Endothelial cell of umbilical vein (primary cell): ENCODE measurements at regions of chr12 and their contacts with region 1.

Region 1: GRCh38 chr12:9464408-9464807 is 143.3 kb downstream of the KLRB1 start:
- DNase-seq: no peak
- H3K4me3 ChIP-seq: no peak overlapping the region
- H3K27ac ChIP-seq: no peak overlapping the region
- H3K4me1 ChIP-seq: no peaks in the 10 kb centered on the region
- H3K27me3 ChIP-seq: no peaks in the 10 kb centered on the region
- CTCF ChIP-seq: no peak
- POLR2A ChIP-seq: no peak

Region 2: GRCh38 chr12:9364224-9365176 is 99.9 kb before region 1 on chr12:
- CTCF ChIA-PET with region 1: interaction called, 11 read pairs
- POLR2A ChIA-PET with region 1: no interaction called
- dilution Hi-C with region 1: no loop called
- intact Hi-C with region 1: no loop called
- DNase-seq: no peak
- H3K4me3 ChIP-seq: no peak overlapping the region
- H3K27ac ChIP-seq: no peak overlapping the region
- H3K4me1 ChIP-seq: no peaks in the 10 kb centered on the region
- H3K27me3 ChIP-seq: peaks cover 3 to 15% of the 10 kb centered on the region in 2 experiments
- CTCF ChIP-seq: no peak
- POLR2A ChIP-seq: no peak

Region 3: GRCh38 chr12:9372202-9372601 is 92.2 kb before region 1 on chr12:
- CTCF ChIA-PET with region 1: interaction called, 39 read pairs
- POLR2A ChIA-PET with region 1: no interaction called
- dilution Hi-C with region 1: no loop called
- intact Hi-C with region 1: no loop called
- DNase-seq: peak; percentile 18
- H3K4me3 ChIP-seq: no peak overlapping the region
- H3K27ac ChIP-seq: no peak overlapping the region
- H3K4me1 ChIP-seq: no peaks in the 10 kb centered on the region
- H3K27me3 ChIP-seq: peaks cover 0 to 16% of the 10 kb centered on the region in 2 experiments
- CTCF ChIP-seq: peak in 1 of 2 donors; percentile 8
- POLR2A ChIP-seq: no peak

Region 4: DNA sequence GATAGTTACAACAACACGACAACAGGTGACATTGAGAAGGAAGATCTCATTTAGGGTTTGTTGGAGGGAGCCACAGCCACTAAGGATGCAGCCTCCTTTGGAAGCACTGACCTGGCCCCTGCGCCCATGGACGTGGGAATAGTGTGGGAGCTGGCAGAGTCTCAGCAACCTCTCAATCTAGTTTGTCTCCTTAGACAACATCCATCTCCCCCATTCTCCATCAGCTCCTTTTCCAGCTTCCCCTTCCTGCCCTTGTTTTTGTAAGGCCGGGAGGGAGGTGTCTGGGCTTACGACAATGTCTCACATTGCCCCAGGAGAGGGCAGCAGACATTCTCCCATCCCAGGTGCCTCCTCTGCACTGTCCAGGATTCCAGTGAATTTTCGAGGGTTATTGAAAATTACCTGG is 86.0 kb before region 1 on chr12:
- CTCF ChIA-PET with region 1: interaction called, 39 read pairs
- POLR2A ChIA-PET with region 1: no interaction called
- dilution Hi-C with region 1: no loop called
- intact Hi-C with region 1: loop called (anchors 1 kb)
- DNase-seq: peak; percentile 49
- H3K4me3 ChIP-seq: no peak overlapping the region
- H3K27ac ChIP-seq: no peak overlapping the region
- H3K4me1 ChIP-seq: no peaks in the 10 kb centered on the region
- H3K27me3 ChIP-seq: no peaks in the 10 kb centered on the region
- CTCF ChIP-seq: peak in 1 of 2 donors; percentile 59
- POLR2A ChIP-seq: no peak